Activated T-helper 1 cell treated with anti-CD3 and anti-CD28 coated beads, Interleukin-12 subunit alpha, Interleukin-12 subunit beta, Interleukin-2, Interleukin-4 antibody, amounts not matched to agents 30 ng/mL and 10 ng/mL and 1 ng/mL, durations not matched to agents 14 hours and 24 hours and 36 hours (primary cell): ENCODE measurements at regions of chr17 and their contacts with region 1.

Region 1: DNA sequence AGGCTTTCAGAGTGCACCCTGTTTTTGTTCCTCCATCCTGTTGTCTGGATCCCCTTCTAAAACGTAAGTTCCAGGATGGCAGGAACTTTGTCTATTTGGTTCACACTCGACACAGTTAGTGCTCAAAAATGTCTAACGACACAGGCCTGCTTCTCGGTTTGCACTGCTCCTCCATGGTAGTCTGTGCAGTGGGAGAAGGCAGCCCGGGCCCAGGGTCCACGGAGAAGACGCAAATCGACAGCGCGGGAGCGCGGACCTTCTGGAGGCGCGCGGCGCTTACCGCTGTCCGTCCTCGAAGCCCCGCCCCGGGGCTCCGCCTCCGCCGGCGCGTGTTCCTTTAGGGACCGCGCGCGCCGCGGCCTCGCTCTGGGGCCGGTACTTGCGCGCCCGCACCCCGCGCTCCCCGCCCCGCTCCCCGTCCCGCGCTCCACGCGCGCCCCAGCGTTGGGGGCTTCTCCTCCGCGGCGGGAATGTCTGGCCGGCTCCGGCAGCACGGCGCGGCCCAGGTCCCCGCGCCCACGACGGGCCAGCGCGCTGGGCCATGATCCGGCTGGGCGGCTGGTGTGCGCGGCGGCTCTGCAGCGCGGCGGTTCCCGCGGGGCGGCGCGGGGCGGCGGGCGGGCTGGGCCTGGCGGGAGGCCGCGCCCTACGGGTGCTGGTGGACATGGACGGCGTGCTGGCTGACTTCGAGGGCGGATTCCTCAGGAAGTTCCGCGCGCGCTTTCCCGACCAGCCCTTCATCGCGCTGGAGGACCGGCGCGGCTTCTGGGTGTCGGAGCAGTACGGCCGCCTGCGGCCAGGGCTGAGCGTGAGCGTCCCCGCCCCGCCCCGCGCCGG is at the start of gene NT5M:
- DNase-seq: peak; percentile 72
- H3K4me3 Mint-ChIP-seq: peak within 1 kb of the TSS; percentile 90
- H3K27ac Mint-ChIP-seq: peak within 1 kb of the TSS; percentile 97
- H3K4me1 Mint-ChIP-seq: peaks cover 36% of the 10 kb centered on the region
- H3K27me3 Mint-ChIP-seq: no peaks in the 10 kb centered on the region
- total RNA-seq, gene NT5M: 5.1 and 5.8 TPM in 2 replicates

Region 2: DNA sequence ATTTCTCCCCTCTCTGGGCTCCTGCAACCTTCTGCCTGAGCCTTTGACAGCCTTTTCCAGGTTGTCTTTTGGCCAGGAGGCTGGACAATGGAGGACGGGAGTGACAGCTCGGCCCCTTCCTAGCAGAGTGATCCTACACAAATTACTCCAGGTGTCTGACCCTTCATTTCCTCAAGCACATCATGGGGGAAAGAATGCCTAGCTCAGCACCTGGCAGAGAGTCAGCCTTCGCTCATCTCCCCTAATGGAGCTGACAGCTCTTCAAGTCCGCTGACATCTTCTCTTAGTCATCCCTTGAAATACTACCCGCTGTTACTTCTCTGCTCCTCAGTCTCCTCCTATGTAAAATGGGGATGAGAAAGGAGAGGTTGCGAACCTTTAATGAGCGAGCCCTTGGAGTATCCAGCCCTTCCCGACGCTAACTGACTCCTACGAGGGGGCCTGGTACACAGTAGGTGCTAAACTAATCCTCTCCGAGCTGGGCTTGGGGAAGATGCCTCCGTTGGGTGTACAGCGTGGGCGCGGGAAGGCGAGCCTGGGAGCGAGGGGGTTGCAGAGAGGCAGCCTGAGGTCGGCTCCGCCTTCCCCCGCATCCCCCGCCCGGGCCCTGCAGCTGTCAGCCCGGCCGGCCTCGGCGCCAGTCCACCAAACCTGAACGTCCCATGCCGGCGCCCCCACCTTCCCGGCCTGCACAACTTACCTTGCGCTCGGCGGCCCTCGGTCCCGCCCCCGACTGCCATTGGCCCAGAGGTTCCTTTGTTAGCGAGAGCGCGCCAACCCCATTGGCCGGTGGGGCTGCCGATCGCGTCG is 261.5 kb before region 1 on chr17:
- intact Hi-C with region 1: loop called (anchors 2 kb)
- DNase-seq: peak; percentile 94
- H3K4me3 Mint-ChIP-seq: peak overlapping the region; percentile 80
- H3K27ac Mint-ChIP-seq: no peak overlapping the region
- H3K4me1 Mint-ChIP-seq: peaks cover 38% of the 10 kb centered on the region
- H3K27me3 Mint-ChIP-seq: peaks cover 2% of the 10 kb centered on the region

Region 3: DNA sequence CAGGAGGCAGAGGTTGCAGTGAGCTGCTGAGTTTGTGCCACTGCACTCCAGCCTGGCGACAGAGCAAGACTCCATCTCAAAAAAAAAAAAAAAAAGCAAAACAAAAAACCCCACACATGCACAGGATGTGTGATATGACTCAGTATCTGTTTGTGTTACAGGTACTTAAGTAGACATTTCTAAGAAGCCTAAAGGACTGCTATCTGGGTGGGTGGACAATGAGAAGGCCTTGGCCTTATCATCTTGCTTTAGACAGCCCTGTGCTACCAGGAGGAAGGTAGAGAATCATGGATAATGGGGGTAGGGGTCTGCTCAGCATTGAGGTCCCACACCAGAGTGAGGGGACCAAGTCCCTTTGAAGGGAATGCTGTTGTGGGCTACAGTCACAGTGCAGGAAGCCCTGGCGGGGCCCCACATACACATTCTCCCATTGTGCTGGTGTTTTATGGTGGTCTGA is 123.8 kb before region 1 on chr17:
- intact Hi-C with region 1: loop called (anchors 1 kb)
- DNase-seq: peak; percentile 39
- H3K4me3 Mint-ChIP-seq: peak overlapping the region; percentile 84
- H3K27ac Mint-ChIP-seq: peak overlapping the region; percentile 97
- H3K4me1 Mint-ChIP-seq: peaks cover 76% of the 10 kb centered on the region
- H3K27me3 Mint-ChIP-seq: no peaks in the 10 kb centered on the region

Region 4: DNA sequence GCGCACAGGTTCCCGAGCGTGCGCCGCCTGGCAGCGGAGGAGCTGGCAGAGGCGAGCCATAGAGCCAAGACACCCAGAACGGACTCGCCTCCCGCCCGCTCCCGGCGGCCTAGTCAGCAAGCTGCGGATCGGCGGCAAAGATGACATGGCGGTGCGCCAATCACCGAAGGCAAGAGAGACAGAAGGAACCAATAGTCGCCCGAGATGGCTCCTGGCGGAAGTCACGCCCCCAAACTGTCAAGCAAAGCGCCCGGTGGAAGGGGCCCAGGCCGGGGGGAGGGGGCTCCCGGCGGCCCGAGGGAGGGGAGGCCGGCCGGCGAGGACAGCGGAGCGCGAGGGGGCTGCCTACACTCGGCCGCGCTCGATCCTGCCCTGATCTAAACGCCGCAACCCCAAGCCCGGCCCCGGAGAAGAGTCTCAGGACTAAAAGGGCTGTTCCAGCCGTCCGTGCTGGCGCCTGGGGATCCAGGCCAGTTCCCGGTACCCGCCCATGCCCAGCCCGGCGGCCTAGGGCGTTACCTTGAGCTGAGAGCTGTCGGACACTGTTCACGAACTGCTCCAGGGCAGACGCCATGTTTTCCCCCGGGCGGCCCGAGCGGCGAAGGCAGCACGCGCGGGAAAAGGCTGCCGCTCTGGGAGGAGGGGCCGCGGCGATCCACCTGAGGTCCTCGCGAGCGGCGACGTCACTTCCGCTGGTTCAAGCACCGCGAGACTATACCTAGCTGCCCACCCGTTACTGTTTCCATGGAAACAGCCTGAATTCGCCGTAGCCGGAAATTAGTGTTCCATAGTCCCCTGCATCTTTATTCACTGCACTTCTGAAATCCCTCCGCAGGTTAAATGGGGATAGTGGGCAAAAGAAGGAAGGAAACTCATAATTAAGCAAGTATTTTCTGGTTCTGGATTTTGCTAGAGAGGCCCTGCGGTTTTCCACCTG is 22.3 kb before region 1 on chr17 and contains the start of gene COPS3:
- intact Hi-C with region 1: loop called (anchors 1 kb)
- DNase-seq: peak; percentile 95
- H3K4me3 Mint-ChIP-seq: peak within 1 kb of the TSS; percentile 91
- H3K27ac Mint-ChIP-seq: peak within 1 kb of the TSS; percentile 94
- H3K4me1 Mint-ChIP-seq: peaks cover 36% of the 10 kb centered on the region
- H3K27me3 Mint-ChIP-seq: no peaks in the 10 kb centered on the region
- total RNA-seq, gene COPS3: 122 and 131 TPM in 2 replicates

Region 5: GRCh38 chr17:17836250-17836817 is 533.1 kb after region 1 on chr17:
- intact Hi-C with region 1: loop called (anchors 5 kb)
- DNase-seq: peak; percentile 95
- H3K4me3 Mint-ChIP-seq: peak overlapping the region; percentile 93
- H3K27ac Mint-ChIP-seq: peak overlapping the region; percentile 86
- H3K4me1 Mint-ChIP-seq: peaks cover 69% of the 10 kb centered on the region
- H3K27me3 Mint-ChIP-seq: no peaks in the 10 kb centered on the region